Calu3 (cell line): ENCODE measurements at regions of chrX and their contacts with region 1.

Region 1: GRCh38 chrX:102950908-102951866 is 14.1 kb downstream of the RAB40AL start:
- DNase-seq: peak; percentile 66
- H3K4me3 Mint-ChIP-seq: peak overlapping the region; percentile 69
- H3K27ac Mint-ChIP-seq: no peak overlapping the region
- H3K4me1 Mint-ChIP-seq: peaks cover 7% of the 10 kb centered on the region
- H3K27me3 Mint-ChIP-seq: no peaks in the 10 kb centered on the region
- CTCF ChIP-seq: peak; percentile 64

Region 2: GRCh38 chrX:102892103-102892502 is 59.1 kb before region 1 on chrX:
- CTCF ChIA-PET with region 1: no interaction called
- intact Hi-C with region 1: no loop called
- DNase-seq: no peak
- H3K4me3 Mint-ChIP-seq: no peak overlapping the region
- H3K27ac Mint-ChIP-seq: no peak overlapping the region
- H3K4me1 Mint-ChIP-seq: no peaks in the 10 kb centered on the region
- H3K27me3 Mint-ChIP-seq: no peaks in the 10 kb centered on the region
- CTCF ChIP-seq: no peak

Region 3: GRCh38 chrX:103063918-103064434 is 112.8 kb after region 1 on chrX and contains the start of gene BEX1:
- CTCF ChIA-PET with region 1: no interaction called
- intact Hi-C with region 1: no loop called
- DNase-seq: peak; percentile 51
- H3K4me3 Mint-ChIP-seq: peak within 1 kb of the TSS; percentile 72
- H3K27ac Mint-ChIP-seq: no peak within 1 kb of the TSS
- H3K4me1 Mint-ChIP-seq: no peaks in the 10 kb centered on the region
- H3K27me3 Mint-ChIP-seq: peaks cover 28% of the 10 kb centered on the region
- CTCF ChIP-seq: no peak
- total RNA-seq, gene BEX1: 9.2 and 12.9 TPM in 2 replicates

Region 4: DNA sequence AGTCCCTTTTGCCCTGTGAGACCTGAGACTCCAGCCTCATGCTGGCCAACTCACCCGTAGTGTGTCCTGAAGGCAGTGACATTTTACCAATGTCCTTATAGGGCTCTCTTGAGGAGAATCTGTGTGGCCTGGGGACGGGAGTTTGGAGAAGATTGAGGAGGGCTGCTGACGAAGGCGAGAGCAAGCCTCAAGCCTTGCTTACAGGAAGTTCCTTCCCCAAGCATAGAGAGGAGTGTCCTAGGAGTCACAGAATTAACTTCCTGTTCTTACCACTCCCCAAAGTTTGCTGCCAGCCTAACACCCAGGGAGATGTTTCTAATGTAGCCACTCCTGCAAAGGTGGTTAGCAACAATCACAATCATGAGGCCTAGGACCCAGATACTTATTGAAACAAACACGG is 141.8 kb after region 1 on chrX and contains the start of gene NXF3:
- CTCF ChIA-PET with region 1: no interaction called
- intact Hi-C with region 1: no loop called
- DNase-seq: no peak
- H3K4me3 Mint-ChIP-seq: no peak within 1 kb of the TSS
- H3K27ac Mint-ChIP-seq: no peak within 1 kb of the TSS
- H3K4me1 Mint-ChIP-seq: no peaks in the 10 kb centered on the region
- H3K27me3 Mint-ChIP-seq: no peaks in the 10 kb centered on the region
- CTCF ChIP-seq: no peak
- total RNA-seq, gene NXF3: 0.27 TPM in 1 of 2 replicates, not detected in the other

Region 5: DNA sequence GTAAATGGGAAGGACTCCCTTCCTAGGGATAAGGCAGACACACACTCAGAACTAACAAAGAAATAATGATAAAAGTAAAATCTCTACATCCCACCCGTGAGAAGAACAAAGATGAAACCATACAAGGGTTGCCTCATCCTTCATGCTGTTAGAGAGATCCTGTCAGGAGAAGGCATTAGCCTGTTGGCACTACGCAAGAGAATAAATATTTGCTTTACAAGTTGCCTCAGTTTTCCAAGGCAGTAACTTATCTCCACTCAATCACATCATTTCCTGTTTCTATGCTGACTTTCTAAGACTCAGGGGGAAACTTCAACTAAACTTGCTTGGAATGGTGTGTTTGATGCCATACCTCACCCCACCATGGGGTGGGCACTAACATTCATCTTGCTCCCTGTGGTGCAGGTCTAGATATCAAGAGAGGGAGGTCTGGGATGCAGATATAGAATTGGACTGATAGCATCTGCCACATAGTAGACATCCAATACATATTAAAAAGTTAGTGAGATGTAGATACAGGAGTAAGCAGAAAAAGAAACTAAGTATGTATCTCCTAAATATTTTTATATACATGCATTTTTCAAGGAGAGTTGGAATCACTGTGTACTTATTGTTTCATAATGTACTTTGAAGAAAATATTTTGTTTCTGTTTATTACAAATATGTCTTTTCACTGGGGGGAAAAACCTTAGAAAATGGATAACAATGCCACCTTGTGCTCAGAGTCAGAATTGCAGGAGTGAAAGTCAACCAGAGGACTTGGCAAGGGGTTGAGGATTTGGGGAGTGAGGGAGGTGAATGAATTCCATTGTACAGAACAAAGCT is 206.5 kb after region 1 on chrX:
- CTCF ChIA-PET with region 1: interaction called, 4 read pairs
- intact Hi-C with region 1: loop called (anchors 1 kb)
- DNase-seq: peak; percentile 41
- H3K4me3 Mint-ChIP-seq: no peak overlapping the region
- H3K27ac Mint-ChIP-seq: no peak overlapping the region
- H3K4me1 Mint-ChIP-seq: peaks cover 19% of the 10 kb centered on the region
- H3K27me3 Mint-ChIP-seq: peaks cover 10% of the 10 kb centered on the region
- CTCF ChIP-seq: peak; percentile 69

Region 6: DNA sequence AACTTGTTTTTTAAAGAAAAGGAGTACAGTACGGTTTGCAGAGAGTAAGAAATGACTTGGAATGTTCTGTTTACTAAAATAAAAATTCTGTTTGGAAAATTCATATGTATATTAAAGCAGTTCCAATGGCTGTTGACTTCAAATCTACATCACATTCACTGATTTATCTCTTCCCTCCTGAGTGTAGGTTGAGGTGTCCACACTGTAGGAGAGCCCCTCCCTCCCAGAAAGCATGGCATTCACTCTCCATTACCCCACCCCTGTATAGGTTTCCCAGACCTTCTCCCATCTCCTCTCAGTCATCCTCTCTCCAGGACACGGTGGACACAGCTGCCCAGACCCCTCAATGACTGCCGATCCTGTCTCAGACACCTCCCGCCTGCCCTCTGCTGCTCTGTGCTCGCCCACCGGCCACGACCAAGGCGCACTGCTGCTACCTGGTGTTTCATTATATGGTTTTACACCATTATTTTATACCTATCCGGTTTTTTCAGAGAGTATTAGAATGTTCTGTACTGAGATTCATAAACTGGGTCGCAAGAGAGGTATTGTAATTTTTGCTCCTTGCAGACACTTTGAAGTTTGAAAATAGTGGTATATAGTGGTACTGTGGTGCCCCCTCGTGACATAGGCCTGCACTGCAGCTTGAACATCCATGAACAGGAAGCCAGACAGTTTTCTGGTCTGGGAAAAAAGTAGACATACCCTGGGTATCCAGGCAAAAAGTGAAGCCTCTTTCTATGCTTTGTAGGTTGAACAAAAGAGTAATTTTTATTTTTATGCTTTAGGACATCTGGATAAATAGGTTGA is 225.0 kb after region 1 on chrX:
- CTCF ChIA-PET with region 1: interaction called, 19 read pairs
- intact Hi-C with region 1: loop called (anchors 1 kb)
- DNase-seq: peak; percentile 71
- H3K4me3 Mint-ChIP-seq: peak overlapping the region; percentile 43
- H3K27ac Mint-ChIP-seq: no peak overlapping the region
- H3K4me1 Mint-ChIP-seq: peaks cover 6% of the 10 kb centered on the region
- H3K27me3 Mint-ChIP-seq: peaks cover 41% of the 10 kb centered on the region
- CTCF ChIP-seq: peak; percentile 36

Region 7: GRCh38 chrX:103464774-103465117 is 513.6 kb after region 1 on chrX:
- CTCF ChIA-PET with region 1: no interaction called
- intact Hi-C with region 1: loop called (anchors 10 kb)
- DNase-seq: peak; percentile 78
- H3K4me3 Mint-ChIP-seq: no peak overlapping the region
- H3K27ac Mint-ChIP-seq: no peak overlapping the region
- H3K4me1 Mint-ChIP-seq: peaks cover 18% of the 10 kb centered on the region
- H3K27me3 Mint-ChIP-seq: no peaks in the 10 kb centered on the region
- CTCF ChIP-seq: peak; percentile 75